HCT116 (cell line): ENCODE measurements at regions of chr15 and their contacts with region 1.

Region 1: DNA sequence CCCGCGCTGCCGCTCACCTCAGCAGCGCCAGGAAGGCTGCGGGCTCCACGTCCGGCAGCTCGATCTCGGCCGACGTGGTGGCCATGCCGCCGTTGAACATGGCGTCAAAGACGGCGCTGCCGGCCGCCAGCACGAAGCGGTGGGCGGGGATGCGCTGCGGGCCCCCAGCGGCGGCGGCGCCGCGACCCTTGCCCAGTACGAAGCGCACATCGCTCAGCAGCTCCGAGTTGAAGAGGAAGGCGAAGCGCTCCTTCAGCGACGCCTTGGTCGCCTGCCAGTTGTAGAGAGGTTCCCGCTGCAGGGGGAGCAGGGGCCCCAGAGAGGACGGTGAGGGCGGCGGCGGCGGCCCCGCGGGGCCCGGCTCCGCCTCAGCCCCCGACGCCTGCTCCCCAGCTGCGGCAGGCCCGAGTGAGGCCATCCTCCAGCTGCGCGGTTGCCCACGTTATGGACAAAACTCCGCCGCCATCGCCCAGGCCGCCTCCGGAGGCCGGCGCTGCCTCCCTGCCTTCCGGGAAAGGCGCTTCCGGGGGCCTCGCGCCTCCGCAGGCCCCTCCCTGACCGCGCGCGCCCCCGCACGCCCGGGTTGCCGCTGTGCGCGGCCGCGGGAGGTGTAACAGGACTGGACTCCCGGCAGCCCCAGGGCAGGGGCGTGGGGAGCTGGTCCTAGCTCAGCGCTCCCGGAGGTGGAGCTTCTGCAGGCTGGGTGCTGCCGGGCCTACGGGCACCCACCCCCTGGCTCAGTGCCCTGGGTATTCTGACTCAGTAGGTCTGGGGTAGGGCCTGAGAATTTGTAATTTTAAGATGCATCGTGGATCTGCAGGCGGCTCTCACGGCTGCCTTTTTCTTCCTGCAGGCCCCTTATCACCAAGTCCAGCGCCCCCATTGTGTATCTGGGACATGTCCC is at the start of gene BTBD1:
- DNase-seq: peak; percentile 87
- ATAC-seq: peak; percentile 97
- H3K4me3 ChIP-seq: peak within 1 kb of the TSS; percentile 66 to 91
- H3K27ac ChIP-seq: peak within 1 kb of the TSS; percentile 97
- H3K4me1 ChIP-seq: peaks cover 9 to 22% of the 10 kb centered on the region in 2 experiments; a peak in 3 of 4 replicates
- H3K27me3 ChIP-seq: no peaks in the 10 kb centered on the region
- CTCF ChIP-seq: no peak
- POLR2A ChIP-seq: peak; percentile 67
- RAD21 ChIP-seq: no peak
- total RNA-seq, gene BTBD1: 80.0 TPM

Region 2: GRCh38 chr15:83030021-83030420 is 37.0 kb before region 1 on chr15:
- CTCF ChIA-PET with region 1: no interaction called
- POLR2A ChIA-PET with region 1: no interaction called
- RAD21 ChIA-PET with region 1: no interaction called
- intact Hi-C with region 1: loop called (anchors 1 kb)
- DNase-seq: peak; percentile 19
- ATAC-seq: peak; percentile 88
- H3K4me3 ChIP-seq: no peak overlapping the region
- H3K27ac ChIP-seq: peak overlapping the region; percentile 26; the same call in 1 of the 2 replicates
- H3K4me1 ChIP-seq: peaks cover 16 to 23% of the 10 kb centered on the region in 2 experiments
- H3K27me3 ChIP-seq: no peaks in the 10 kb centered on the region
- CTCF ChIP-seq: no peak
- POLR2A ChIP-seq: no peak
- RAD21 ChIP-seq: no peak